Transverse colon (tissue), 4 donors: ENCODE measurements at regions of chr1 and their contacts with region 1.

Region 1: DNA sequence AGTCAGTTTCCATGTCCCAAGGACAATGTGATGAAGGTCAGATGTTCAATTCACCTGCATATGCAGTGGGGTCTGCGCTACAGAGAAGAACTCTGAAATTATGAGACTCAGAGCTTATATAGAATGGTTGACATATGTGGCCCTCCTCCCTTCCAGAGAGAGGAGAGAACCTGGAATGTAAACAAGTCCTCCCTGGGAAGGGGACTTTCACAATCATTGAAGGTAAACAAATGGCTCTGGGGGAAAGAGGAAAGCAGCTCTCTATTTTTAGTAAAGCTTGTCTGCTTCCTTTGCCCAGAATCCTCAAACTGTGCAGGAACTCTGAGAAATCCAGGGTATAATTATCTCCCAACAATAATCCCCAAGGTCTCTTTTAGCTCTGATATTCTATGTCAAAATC is 9.8 kb downstream of the OVGP1 start:
- DNase-seq: no peak
- H3K4me3 ChIP-seq: no peak overlapping the region
- H3K27ac ChIP-seq: no peak overlapping the region
- H3K4me1 ChIP-seq: peaks cover 0 to 10% (median 0%) of the 10 kb centered on the region in 4 donors
- H3K27me3 ChIP-seq: no peaks in the 10 kb centered on the region
- CTCF ChIP-seq: no peak
- EP300 ChIP-seq: no peak
- POLR2A ChIP-seq: no peak

Region 2: GRCh38 chr1:111366256-111366655 is 51.5 kb before region 1 on chr1:
- in situ Hi-C with region 1: no loop called
- intact Hi-C with region 1: loop called (anchors 2 kb)
- DNase-seq: no peak
- H3K4me3 ChIP-seq: no peak overlapping the region
- H3K27ac ChIP-seq: no peak overlapping the region
- H3K4me1 ChIP-seq: no peaks in the 10 kb centered on the region
- H3K27me3 ChIP-seq: peaks cover 5% of the 10 kb centered on the region
- CTCF ChIP-seq: no peak
- EP300 ChIP-seq: no peak
- POLR2A ChIP-seq: no peak

Region 3: DNA sequence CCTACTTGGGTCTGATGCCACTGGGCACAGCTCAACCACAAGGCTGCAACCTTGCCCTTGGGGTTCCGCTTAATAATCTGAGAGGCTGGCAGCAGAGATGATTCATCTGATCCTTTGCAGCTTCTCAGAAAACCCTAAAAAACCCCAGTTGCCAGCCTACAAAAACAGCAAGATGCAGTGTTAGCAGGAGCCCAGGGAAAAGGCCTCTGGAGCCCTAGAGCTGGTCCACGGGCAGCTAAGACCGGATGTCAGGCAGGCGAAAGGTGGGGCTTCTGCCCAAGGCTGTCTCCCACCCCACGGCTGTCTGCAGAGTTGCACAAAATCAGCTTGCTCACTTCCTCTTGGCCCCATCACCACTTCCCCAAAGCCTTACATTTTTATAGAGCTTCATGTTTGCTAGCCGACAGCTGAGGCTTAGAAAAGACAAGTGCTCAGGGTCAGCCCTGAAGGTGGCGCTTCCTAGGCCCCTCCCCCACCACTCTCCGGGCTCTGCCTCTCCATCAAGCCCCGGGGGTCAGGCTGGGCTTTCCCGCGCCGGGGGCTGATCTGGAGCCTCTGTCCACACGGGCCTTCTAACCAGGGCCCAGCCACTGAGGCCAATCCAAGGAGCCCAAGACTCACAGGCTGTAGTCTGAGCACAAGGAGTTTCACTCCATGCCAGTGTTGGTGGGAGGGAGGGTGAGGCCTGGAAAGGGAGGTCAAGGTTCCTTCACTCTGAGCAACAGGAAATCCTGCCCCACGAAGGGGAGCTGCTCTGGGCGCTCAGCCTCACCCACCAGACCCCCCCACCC is 89.9 kb after region 1 on chr1:
- in situ Hi-C with region 1: no loop called
- intact Hi-C with region 1: no loop called
- DNase-seq: peak; percentile 84
- H3K4me3 ChIP-seq: peak overlapping the region in 3 of 4 donors; percentile 19 to 46 (median 30)
- H3K27ac ChIP-seq: peak overlapping the region; percentile 91 to 98 (median 98)
- H3K4me1 ChIP-seq: peaks cover 21 to 52% (median 37%) of the 10 kb centered on the region in 4 donors
- H3K27me3 ChIP-seq: no peaks in the 10 kb centered on the region
- CTCF ChIP-seq: no peak
- EP300 ChIP-seq: no peak
- POLR2A ChIP-seq: no peak